ENCODE measurements at regions of chr2 and their contacts with region 1.

Region 1: DNA sequence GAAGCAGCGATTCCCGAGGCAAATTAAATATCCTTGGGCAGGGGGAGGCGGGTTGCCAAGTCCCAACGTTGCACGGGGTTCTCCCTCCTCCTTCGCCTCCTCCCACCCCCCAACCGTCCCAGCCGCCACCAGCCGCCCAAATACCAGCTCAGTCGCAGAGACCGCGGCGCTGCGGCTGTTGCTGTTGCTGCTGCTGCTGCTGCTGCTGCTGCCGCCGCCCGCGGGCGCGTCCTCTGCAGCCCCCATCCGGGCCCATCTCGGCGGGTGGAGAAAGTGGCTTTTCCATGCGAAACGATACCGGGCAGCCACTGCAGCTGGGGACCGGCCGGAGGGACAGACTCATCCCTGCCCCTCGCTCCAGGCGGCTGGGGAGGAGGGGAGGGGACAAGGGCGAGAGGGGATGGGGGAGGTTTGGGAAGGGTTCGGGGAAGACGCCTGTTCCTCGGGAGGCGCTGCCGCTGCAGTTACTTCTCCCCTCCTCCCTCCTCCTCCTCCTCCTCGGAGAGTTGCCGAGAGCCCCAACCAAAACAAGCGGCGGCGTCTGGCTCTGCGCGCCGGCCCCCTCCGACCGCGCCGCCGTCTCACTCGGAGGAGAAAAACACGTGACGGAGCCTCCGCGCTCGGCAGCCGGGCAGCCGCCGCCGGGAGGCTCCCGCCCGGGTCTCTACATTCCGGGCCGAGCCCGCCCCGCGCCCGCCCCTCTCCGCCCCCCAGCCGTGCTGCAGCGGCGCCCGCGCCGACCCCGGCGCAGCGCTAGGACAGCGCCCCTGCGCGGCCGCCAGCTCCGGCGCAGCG is at the start of gene IRS1:
- DNase-seq: no peak
- ATAC-seq: peak; percentile 53
- H3K4me3 ChIP-seq: peak within 1 kb of the TSS; percentile 93
- H3K27ac ChIP-seq: no peak within 1 kb of the TSS
- H3K4me1 ChIP-seq: peaks cover 8% of the 10 kb centered on the region
- H3K27me3 ChIP-seq: no peaks in the 10 kb centered on the region
- CTCF ChIP-seq: peak in 2 of 3 experiments; percentile 1 to 37; a peak in 2 of 6 replicates
- EP300 ChIP-seq: no peak
- POLR2A ChIP-seq: 0 out of 2 replicates have a peak, but pooled peaks have one; percentile 17
- RAD21 ChIP-seq: peak; percentile 56
- polyA plus RNA-seq, gene IRS1: 0.03 to 0.13 TPM

Region 2: GRCh38 chr2:225660262-225661131 is 1138.9 kb before region 1 on chr2:
- CTCF ChIA-PET with region 1: interaction called, 34 read pairs
- POLR2A ChIA-PET with region 1: no interaction called
- RAD21 ChIA-PET with region 1: interaction called, 13 read pairs
- SMC1A ChIA-PET with region 1: interaction called, 8 read pairs
- in situ Hi-C with region 1: loop called (anchors 5 kb)
- intact Hi-C with region 1: no loop called
- DNase-seq: peak; percentile 9
- ATAC-seq: peak; percentile 95
- H3K4me3 ChIP-seq: no peak overlapping the region
- H3K27ac ChIP-seq: no peak overlapping the region
- H3K4me1 ChIP-seq: no peaks in the 10 kb centered on the region
- H3K27me3 ChIP-seq: no peaks in the 10 kb centered on the region
- CTCF ChIP-seq: peak; percentile 85 to 90 (median 86)
- EP300 ChIP-seq: no peak
- POLR2A ChIP-seq: no peak
- RAD21 ChIP-seq: peak; percentile 94

Region 3: DNA sequence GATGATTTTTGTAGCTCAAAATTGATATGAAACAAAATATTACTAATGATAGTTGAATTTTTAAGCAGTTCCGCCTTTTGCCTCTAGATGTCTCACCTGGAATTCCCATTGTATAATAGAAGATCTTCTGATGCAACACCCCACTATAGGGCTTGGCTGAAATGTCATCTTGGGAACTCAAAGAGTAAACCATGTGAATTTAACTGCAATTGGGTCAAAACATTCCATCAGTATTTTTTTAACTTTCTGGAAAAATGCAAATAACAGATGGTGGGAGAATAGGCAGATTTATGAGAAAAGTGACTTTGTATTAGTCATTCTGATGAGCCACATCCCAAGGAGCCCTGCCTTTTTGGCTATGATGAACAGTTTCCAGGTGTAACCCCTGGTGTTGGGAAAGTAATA is 909.9 kb before region 1 on chr2:
- CTCF ChIA-PET with region 1: interaction called, 38 read pairs
- POLR2A ChIA-PET with region 1: no interaction called
- RAD21 ChIA-PET with region 1: interaction called, 18 read pairs
- SMC1A ChIA-PET with region 1: interaction called, 19 read pairs
- in situ Hi-C with region 1: loop called (anchors 5 kb)
- intact Hi-C with region 1: loop called (anchors 2 kb)
- DNase-seq: no peak
- ATAC-seq: peak; percentile 66
- H3K4me3 ChIP-seq: no peak overlapping the region
- H3K27ac ChIP-seq: no peak overlapping the region
- H3K4me1 ChIP-seq: no peaks in the 10 kb centered on the region
- H3K27me3 ChIP-seq: no peaks in the 10 kb centered on the region
- CTCF ChIP-seq: peak; percentile 52 to 59 (median 57); a peak in 5 of 6 replicates
- EP300 ChIP-seq: no peak
- POLR2A ChIP-seq: no peak
- RAD21 ChIP-seq: peak; percentile 69

Region 4: GRCh38 chr2:226508683-226509082 is 290.7 kb before region 1 on chr2:
- CTCF ChIA-PET with region 1: interaction called, 3 read pairs
- POLR2A ChIA-PET with region 1: no interaction called
- RAD21 ChIA-PET with region 1: no interaction called
- SMC1A ChIA-PET with region 1: no interaction called
- in situ Hi-C with region 1: no loop called
- intact Hi-C with region 1: loop called (anchors 10 kb)
- DNase-seq: no peak
- ATAC-seq: no peak
- H3K4me3 ChIP-seq: no peak overlapping the region
- H3K27ac ChIP-seq: no peak overlapping the region
- H3K4me1 ChIP-seq: no peaks in the 10 kb centered on the region
- H3K27me3 ChIP-seq: no peaks in the 10 kb centered on the region
- CTCF ChIP-seq: no peak
- EP300 ChIP-seq: no peak
- POLR2A ChIP-seq: no peak
- RAD21 ChIP-seq: no peak

Region 5: DNA sequence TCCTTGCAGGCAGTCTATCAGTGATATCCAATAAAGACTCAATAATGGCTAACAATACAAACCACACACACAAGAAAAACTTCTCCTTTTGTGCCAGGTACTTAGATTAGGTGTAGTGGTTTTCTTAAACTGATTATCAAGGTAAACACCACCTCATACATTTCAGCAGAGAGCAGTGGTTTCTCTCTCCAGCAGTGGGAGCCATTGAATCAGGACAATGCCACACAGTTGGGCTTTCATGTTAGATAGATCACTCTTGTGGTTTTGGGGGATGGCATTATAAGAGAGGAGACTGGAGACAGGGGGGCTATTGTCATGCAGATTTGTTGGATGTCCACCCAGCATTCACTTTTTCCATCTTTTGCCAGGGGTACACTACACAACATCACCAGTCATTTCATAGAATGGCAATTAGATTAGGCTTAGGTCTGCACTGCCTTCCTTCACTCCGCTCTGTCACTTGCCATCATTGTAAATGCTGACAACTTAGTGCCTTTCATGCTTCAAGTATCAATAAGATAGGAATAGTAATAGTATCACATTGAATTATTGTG is 13.8 kb after region 1 on chr2:
- CTCF ChIA-PET with region 1: interaction called, 16 read pairs
- POLR2A ChIA-PET with region 1: interaction called, 5 read pairs
- RAD21 ChIA-PET with region 1: interaction called, 3 read pairs
- SMC1A ChIA-PET with region 1: interaction called, 4 read pairs
- in situ Hi-C with region 1: no loop called
- intact Hi-C with region 1: no loop called
- DNase-seq: no peak
- ATAC-seq: peak; percentile 79
- H3K4me3 ChIP-seq: no peak overlapping the region
- H3K27ac ChIP-seq: no peak overlapping the region
- H3K4me1 ChIP-seq: no peaks in the 10 kb centered on the region
- H3K27me3 ChIP-seq: no peaks in the 10 kb centered on the region; a peak in 1 of 4 replicates
- CTCF ChIP-seq: peak; percentile 60 to 70 (median 63)
- EP300 ChIP-seq: no peak
- POLR2A ChIP-seq: no peak
- RAD21 ChIP-seq: peak; percentile 92

Region 6: DNA sequence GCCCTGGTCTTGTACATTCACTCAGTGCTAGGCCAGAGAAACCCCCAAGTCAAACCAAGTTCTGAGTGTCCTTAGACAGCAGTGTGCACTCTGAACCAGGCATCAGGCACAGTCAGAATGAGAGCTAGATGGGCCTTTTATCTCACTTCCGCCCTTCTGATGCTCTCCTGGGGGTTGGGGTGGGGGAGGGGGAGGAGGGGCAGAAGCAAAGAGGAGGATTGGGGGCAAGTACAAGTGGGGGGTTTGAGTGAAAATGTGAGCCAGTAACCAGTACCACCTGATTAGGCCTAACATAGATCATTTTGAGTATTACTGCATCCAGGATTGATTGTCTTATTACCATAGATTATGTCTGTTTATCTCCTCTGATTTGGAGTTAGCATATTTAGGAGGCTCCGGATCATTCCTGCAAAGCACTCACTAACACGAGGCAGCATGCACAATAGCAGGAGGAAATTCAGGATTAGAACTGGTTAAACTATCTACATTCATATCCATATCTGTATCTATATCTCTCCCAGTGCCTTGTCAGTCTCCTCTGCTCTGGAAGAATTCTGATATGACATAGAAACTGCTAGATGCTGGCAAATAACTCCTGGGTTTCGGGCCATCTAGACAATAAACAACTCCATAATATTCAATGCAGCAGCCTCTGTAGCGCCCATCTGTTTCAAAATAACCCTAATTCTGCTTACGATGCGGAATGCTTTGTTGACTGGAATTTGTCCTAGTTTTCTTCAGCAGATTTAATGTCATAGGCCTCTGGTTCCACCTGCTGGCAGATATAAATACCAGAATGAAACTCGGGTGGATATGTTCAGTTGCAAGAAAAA is 185.6 kb after region 1 on chr2:
- CTCF ChIA-PET with region 1: interaction called, 26 read pairs
- POLR2A ChIA-PET with region 1: no interaction called
- RAD21 ChIA-PET with region 1: interaction called, 31 read pairs
- SMC1A ChIA-PET with region 1: interaction called, 17 read pairs
- in situ Hi-C with region 1: no loop called
- intact Hi-C with region 1: loop called (anchors 1 kb)
- DNase-seq: peak; percentile 47
- ATAC-seq: peak; percentile 98
- H3K4me3 ChIP-seq: no peak overlapping the region
- H3K27ac ChIP-seq: peak overlapping the region; percentile 38
- H3K4me1 ChIP-seq: peaks cover 15% of the 10 kb centered on the region
- H3K27me3 ChIP-seq: no peaks in the 10 kb centered on the region
- CTCF ChIP-seq: peak; percentile 55 to 66 (median 66); a peak in 5 of 6 replicates
- EP300 ChIP-seq: no peak
- POLR2A ChIP-seq: 0 out of 2 replicates have a peak, but pooled peaks have one; percentile 22
- RAD21 ChIP-seq: peak; percentile 95

Region 7: DNA sequence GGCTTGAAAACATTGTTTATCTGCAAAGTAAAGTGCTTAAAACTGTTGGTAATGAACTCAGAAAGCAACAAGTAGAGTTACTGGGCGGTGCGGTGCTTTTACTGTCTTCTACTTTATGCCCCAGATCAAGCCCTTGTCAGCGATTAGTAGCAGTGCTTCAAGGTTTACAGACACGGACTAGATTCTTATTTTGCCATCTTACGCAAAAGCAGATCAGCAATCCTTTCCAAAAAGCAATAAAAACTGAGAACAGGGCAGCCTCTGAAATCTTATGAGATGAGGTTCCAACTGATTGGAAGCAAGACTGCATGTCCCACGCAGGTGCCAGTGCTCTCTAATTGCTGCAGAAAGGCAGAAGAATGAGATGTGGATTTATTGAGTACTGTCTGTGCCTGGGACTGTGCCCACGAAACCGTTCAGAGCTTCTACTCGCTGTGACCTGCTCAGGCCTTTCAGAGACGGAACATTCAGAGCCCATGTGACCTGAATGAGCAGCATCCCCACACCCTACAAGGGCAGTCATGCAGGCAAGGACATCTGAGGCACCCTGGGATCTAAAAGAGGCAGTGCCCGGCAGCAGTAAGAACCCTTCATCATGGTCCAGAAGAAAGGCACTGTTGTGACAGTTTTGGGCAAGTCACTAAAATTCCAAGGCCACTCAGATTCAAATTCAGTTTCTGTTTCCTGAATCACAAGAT is 380.8 kb after region 1 on chr2:
- CTCF ChIA-PET with region 1: no interaction called
- POLR2A ChIA-PET with region 1: no interaction called
- RAD21 ChIA-PET with region 1: no interaction called
- SMC1A ChIA-PET with region 1: no interaction called
- in situ Hi-C with region 1: no loop called
- intact Hi-C with region 1: no loop called
- DNase-seq: no peak
- ATAC-seq: peak; percentile 38; the same call in 2 of the 3 replicates
- H3K4me3 ChIP-seq: no peak overlapping the region
- H3K27ac ChIP-seq: no peak overlapping the region
- H3K4me1 ChIP-seq: no peaks in the 10 kb centered on the region
- H3K27me3 ChIP-seq: no peaks in the 10 kb centered on the region
- CTCF ChIP-seq: no peak
- EP300 ChIP-seq: no peak
- POLR2A ChIP-seq: no peak
- RAD21 ChIP-seq: no peak

Measured in GM12878 (cell line).